A673 (cell line): ENCODE measurements at regions of chr4 and their contacts with region 1.

Region 1: GRCh38 chr4:164484551-164484950 is 269.4 kb upstream of the SMIM31 start:
- DNase-seq: no peak
- H3K4me3 ChIP-seq: no peak overlapping the region
- H3K27ac ChIP-seq: peak overlapping the region; percentile 12
- H3K4me1 ChIP-seq: peaks cover 52% of the 10 kb centered on the region
- H3K27me3 ChIP-seq: no peaks in the 10 kb centered on the region
- CTCF ChIP-seq: no peak

Region 2: DNA sequence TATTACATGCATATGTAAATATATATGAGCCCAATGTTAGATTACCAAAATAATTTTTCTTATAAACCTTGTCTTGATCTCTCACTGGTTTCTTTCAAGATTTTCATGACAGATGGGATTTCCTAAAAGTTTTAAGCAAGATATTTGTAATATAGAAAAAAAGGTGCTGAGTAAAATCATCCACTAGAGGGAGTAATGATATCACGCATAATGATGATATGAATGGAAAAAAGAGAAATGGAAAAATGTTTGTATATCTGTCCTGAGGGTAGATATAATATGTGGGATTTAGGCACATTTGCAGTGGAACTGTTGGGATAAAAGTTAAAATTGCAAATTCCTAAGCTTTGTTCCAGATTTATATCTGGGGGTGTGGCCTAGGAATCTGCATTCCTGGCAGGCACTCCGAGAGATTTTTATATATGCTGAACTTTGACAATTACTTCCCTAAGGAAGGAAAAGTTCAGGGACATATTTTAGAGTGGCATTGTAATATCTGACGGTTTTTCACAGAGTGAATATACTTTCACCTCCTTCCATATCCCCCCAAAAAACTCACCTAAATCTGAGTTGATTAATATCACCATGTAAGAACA is 929.6 kb before region 1 on chr4:
- CTCF ChIA-PET with region 1: no interaction called
- POLR2A ChIA-PET with region 1: no interaction called
- intact Hi-C with region 1: loop called (anchors 10 kb)
- DNase-seq: peak; percentile 65
- H3K4me3 ChIP-seq: no peak overlapping the region
- H3K27ac ChIP-seq: no peak overlapping the region
- H3K4me1 ChIP-seq: peaks cover 15% of the 10 kb centered on the region
- H3K27me3 ChIP-seq: no peaks in the 10 kb centered on the region
- CTCF ChIP-seq: peak; percentile 82

Region 3: GRCh38 chr4:164081801-164082200 is 402.8 kb before region 1 on chr4:
- CTCF ChIA-PET with region 1: no interaction called
- POLR2A ChIA-PET with region 1: no interaction called
- intact Hi-C with region 1: loop called (anchors 10 kb)
- DNase-seq: no peak
- H3K4me3 ChIP-seq: no peak overlapping the region
- H3K27ac ChIP-seq: peak overlapping the region; percentile 44
- H3K4me1 ChIP-seq: peaks cover 11% of the 10 kb centered on the region
- H3K27me3 ChIP-seq: no peaks in the 10 kb centered on the region
- CTCF ChIP-seq: no peak

Region 4: DNA sequence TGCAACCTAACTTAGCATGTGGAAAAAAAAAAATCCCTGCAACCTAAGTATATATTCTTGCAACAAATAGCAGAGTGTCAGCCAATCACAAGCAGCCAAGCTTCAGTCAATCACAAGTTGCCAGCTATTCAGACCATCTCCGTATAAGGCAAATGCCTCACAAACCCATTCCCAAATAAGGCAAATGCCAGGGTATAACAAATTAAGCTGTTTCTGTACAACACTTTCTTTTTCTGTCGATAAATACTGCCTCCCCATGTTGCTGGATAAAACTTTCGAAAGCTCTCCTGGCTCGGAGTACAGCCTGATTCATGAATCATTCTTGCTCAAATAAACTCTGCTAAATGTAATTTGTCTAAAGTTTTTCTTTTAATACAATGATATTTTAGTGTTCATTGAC is 191.3 kb before region 1 on chr4:
- CTCF ChIA-PET with region 1: no interaction called
- POLR2A ChIA-PET with region 1: no interaction called
- intact Hi-C with region 1: no loop called
- DNase-seq: no peak
- H3K4me3 ChIP-seq: no peak overlapping the region
- H3K27ac ChIP-seq: no peak overlapping the region
- H3K4me1 ChIP-seq: no peaks in the 10 kb centered on the region
- H3K27me3 ChIP-seq: no peaks in the 10 kb centered on the region
- CTCF ChIP-seq: no peak

Region 5: DNA sequence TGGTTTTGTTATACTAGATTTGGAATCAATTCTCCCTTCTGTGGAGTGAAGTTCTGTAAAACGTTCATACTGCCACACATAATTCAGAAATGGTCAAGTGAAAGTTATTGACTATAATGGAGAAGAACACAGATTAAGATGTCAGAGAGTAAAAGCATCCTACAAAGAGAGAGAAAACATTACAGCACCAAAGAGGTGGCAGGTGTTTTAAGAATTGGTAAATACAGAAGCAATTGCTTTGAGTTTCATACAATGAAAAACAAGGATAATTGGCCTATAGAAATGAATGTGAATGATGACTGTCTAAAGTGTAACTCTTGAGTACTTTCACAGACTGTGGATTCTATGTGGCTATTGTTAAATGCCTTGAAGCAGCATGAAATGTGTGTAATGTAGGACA is 166.2 kb before region 1 on chr4:
- CTCF ChIA-PET with region 1: no interaction called
- POLR2A ChIA-PET with region 1: no interaction called
- intact Hi-C with region 1: loop called (anchors 10 kb)
- DNase-seq: no peak
- H3K4me3 ChIP-seq: no peak overlapping the region
- H3K27ac ChIP-seq: no peak overlapping the region
- H3K4me1 ChIP-seq: peaks cover 11% of the 10 kb centered on the region
- H3K27me3 ChIP-seq: no peaks in the 10 kb centered on the region
- CTCF ChIP-seq: no peak

Region 6: DNA sequence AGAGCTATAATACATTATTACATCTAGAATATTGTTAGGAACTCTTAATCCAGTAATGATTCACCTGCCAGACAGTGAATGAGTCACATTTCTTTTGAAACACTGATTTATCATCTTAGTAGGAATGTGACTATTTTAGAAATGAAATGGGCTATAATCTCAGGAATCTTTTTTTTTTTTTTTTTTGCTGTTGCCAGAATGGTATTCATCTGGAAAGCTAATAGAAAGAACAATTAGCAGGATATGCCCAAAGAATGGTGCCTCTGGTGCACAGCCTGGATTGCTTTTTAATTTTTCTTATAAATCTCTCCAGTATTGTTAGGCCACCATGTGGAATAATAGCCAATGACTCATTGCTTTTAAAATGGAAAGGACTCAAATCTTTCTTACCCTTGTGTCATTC is 88.3 kb after region 1 on chr4:
- CTCF ChIA-PET with region 1: no interaction called
- POLR2A ChIA-PET with region 1: no interaction called
- intact Hi-C with region 1: loop called (anchors 2 kb)
- DNase-seq: peak; percentile 84
- H3K4me3 ChIP-seq: no peak overlapping the region
- H3K27ac ChIP-seq: peak overlapping the region; percentile 21
- H3K4me1 ChIP-seq: peaks cover 23% of the 10 kb centered on the region
- H3K27me3 ChIP-seq: no peaks in the 10 kb centered on the region
- CTCF ChIP-seq: no peak

Region 7: DNA sequence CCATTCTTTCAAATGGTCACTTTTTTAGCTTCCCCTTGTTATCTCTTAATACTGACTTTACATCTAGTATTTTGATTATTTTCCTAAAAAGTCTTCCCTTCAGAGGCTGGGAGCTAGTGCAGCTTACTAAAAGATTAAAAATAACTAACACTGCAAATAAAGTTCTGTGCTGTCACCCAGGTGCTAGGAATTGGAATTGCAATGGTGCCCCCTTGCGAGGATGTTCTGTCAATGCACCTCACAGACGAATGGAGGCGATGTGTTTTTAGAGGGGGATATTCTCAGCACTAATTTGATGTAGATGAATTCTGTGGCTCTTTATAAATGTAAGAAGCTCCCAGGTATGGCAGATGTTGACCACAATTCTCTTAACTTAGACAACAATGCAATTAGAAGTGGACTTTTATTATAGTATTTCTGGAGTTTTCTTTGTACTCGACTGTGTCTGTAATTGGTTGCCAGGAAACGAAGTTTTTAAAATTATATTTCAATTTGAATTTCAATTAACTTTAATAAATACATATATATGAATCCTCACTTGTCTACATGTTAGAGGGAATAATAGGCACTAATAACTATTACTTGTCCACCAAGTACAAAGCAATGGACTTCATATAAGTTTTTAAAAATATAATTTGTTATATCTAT is 247.4 kb after region 1 on chr4:
- CTCF ChIA-PET with region 1: interaction called, 19 read pairs
- POLR2A ChIA-PET with region 1: no interaction called
- intact Hi-C with region 1: loop called (anchors 2 kb)
- DNase-seq: peak; percentile 85
- H3K4me3 ChIP-seq: no peak overlapping the region
- H3K27ac ChIP-seq: peak overlapping the region; percentile 34
- H3K4me1 ChIP-seq: peaks cover 25% of the 10 kb centered on the region
- H3K27me3 ChIP-seq: no peaks in the 10 kb centered on the region
- CTCF ChIP-seq: peak; percentile 93